CD8-positive, alpha-beta T cell (primary cell): ENCODE measurements at regions of chrX and their contacts with region 1.

Region 1: GRCh38 chrX:102863735-102864134 is 73.3 kb upstream of the RAB40AL start:
- DNase-seq: peak; percentile 68 to 86 (median 79)
- ATAC-seq: peak; percentile 100
- H3K4me3 ChIP-seq: no peak overlapping the region
- H3K4me3 Mint-ChIP-seq: no peak overlapping the region
- H3K27ac ChIP-seq: no peak overlapping the region
- H3K27ac Mint-ChIP-seq: no peak overlapping the region
- H3K4me1 ChIP-seq: no peaks in the 10 kb centered on the region
- H3K4me1 Mint-ChIP-seq: no peaks in the 10 kb centered on the region
- H3K27me3 ChIP-seq: no peaks in the 10 kb centered on the region
- H3K27me3 Mint-ChIP-seq: no peaks in the 10 kb centered on the region
- CTCF ChIP-seq: peak; percentile 73

Region 2: GRCh38 chrX:101595739-101596419 is 1267.9 kb before region 1 on chrX:
- CTCF ChIA-PET with region 1: no interaction called
- POLR2A ChIA-PET with region 1: no interaction called
- intact Hi-C with region 1: loop called in 1 of 2 experiments (anchors 10 kb)
- DNase-seq: peak in 5 of 9 experiments; percentile 13 to 76 (median 42)
- ATAC-seq: peak; percentile 72
- H3K4me3 ChIP-seq: no peak overlapping the region
- H3K4me3 Mint-ChIP-seq: no peak overlapping the region
- H3K27ac ChIP-seq: no peak overlapping the region
- H3K27ac Mint-ChIP-seq: no peak overlapping the region
- H3K4me1 ChIP-seq: no peaks in the 10 kb centered on the region
- H3K4me1 Mint-ChIP-seq: no peaks in the 10 kb centered on the region
- H3K27me3 ChIP-seq: no peaks in the 10 kb centered on the region
- H3K27me3 Mint-ChIP-seq: peaks cover 14% of the 10 kb centered on the region
- CTCF ChIP-seq: peak; percentile 65

Region 3: GRCh38 chrX:102067966-102068708 is 795.6 kb before region 1 on chrX:
- CTCF ChIA-PET with region 1: no interaction called
- POLR2A ChIA-PET with region 1: no interaction called
- intact Hi-C with region 1: loop called (anchors 1 to 5 kb)
- DNase-seq: peak in 5 of 9 experiments; percentile 1 to 32 (median 20)
- ATAC-seq: no peak
- H3K4me3 ChIP-seq: no peak overlapping the region
- H3K4me3 Mint-ChIP-seq: no peak overlapping the region
- H3K27ac ChIP-seq: no peak overlapping the region
- H3K27ac Mint-ChIP-seq: no peak overlapping the region
- H3K4me1 ChIP-seq: no peaks in the 10 kb centered on the region
- H3K4me1 Mint-ChIP-seq: no peaks in the 10 kb centered on the region
- H3K27me3 ChIP-seq: no peaks in the 10 kb centered on the region
- H3K27me3 Mint-ChIP-seq: peaks cover 8% of the 10 kb centered on the region
- CTCF ChIP-seq: peak; percentile 32

Region 4: DNA sequence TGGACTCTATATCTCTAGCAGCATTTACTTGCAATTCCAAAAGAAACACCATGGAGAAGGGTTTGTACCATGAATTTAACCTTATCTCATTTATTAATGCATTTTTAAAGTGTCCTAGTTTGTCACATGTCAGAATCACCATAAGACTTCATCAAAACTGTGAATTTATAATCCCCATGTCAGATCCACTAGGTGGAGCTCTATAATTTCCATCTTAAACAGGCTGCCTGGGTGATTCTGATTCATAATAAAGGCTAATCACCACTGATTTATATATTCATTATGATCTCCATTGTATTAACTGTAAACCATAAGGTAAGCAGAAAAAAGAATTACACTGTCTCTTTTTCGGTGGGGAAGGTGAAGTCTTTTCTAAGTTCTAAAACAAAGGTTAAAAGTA is 734.3 kb before region 1 on chrX:
- CTCF ChIA-PET with region 1: no interaction called
- POLR2A ChIA-PET with region 1: no interaction called
- intact Hi-C with region 1: loop called (anchors 5 to 10 kb)
- DNase-seq: peak in 2 of 9 experiments; percentile 3 to 10
- ATAC-seq: no peak
- H3K4me3 ChIP-seq: no peak overlapping the region
- H3K4me3 Mint-ChIP-seq: no peak overlapping the region
- H3K27ac ChIP-seq: no peak overlapping the region
- H3K27ac Mint-ChIP-seq: no peak overlapping the region
- H3K4me1 ChIP-seq: no peaks in the 10 kb centered on the region
- H3K4me1 Mint-ChIP-seq: peaks cover 8% of the 10 kb centered on the region
- H3K27me3 ChIP-seq: no peaks in the 10 kb centered on the region
- H3K27me3 Mint-ChIP-seq: peaks cover 28% of the 10 kb centered on the region
- CTCF ChIP-seq: peak; percentile 36

Region 5: DNA sequence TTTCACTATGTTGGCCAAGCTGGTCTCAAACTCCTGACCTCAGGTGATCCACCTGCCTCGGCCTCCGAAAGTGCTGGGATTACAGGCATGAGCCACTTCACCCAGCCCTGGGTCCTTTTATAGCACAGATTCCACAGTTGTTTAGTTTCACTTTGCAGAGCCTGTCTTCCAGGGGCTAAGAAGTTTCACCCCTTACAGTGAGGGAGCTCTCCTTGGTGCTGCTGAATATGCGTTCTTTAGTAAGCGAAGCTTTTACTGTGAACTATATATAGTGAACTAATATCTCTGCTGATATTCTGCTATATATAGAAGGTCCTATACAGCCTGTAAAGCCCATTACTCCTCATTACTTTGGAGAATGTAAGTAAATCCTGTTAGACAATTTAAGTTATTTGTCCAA is 725.7 kb before region 1 on chrX:
- CTCF ChIA-PET with region 1: no interaction called
- POLR2A ChIA-PET with region 1: no interaction called
- intact Hi-C with region 1: loop called in 1 of 2 experiments (anchors 10 kb)
- DNase-seq: no peak
- ATAC-seq: no peak
- H3K4me3 ChIP-seq: no peak overlapping the region
- H3K4me3 Mint-ChIP-seq: no peak overlapping the region
- H3K27ac ChIP-seq: no peak overlapping the region
- H3K27ac Mint-ChIP-seq: no peak overlapping the region
- H3K4me1 ChIP-seq: no peaks in the 10 kb centered on the region
- H3K4me1 Mint-ChIP-seq: no peaks in the 10 kb centered on the region
- H3K27me3 ChIP-seq: no peaks in the 10 kb centered on the region
- H3K27me3 Mint-ChIP-seq: peaks cover 11% of the 10 kb centered on the region
- CTCF ChIP-seq: no peak

Region 6: DNA sequence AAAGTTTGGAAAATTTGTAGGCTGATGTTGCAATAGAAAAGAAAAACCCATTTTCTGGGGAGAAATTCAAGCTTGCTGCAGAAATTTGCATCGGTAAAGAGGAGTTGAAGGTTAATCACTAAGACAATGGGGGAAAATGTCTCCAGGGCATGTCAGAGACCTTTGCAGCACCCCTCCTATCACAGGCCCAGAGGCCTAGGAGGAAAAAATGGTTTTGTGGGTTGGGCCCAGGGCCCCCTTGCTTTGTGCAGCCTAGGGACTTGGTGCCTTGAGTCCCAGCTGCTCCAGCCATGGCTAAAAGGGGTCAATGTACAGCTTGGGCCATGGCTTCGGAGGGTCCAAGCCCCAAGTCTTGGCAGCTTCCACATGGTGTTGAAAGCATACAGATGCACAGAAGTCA is 365.0 kb before region 1 on chrX:
- CTCF ChIA-PET with region 1: no interaction called
- POLR2A ChIA-PET with region 1: no interaction called
- intact Hi-C with region 1: loop called in 1 of 2 experiments (anchors 10 kb)
- DNase-seq: no peak
- ATAC-seq: no peak
- H3K4me3 ChIP-seq: no peak overlapping the region
- H3K4me3 Mint-ChIP-seq: no peak overlapping the region
- H3K27ac ChIP-seq: no peak overlapping the region
- H3K27ac Mint-ChIP-seq: no peak overlapping the region
- H3K4me1 ChIP-seq: no peaks in the 10 kb centered on the region
- H3K4me1 Mint-ChIP-seq: no peaks in the 10 kb centered on the region
- H3K27me3 ChIP-seq: peaks cover 0 to 3% of the 10 kb centered on the region in 2 experiments
- H3K27me3 Mint-ChIP-seq: no peaks in the 10 kb centered on the region
- CTCF ChIP-seq: no peak

Region 7: GRCh38 chrX:102643275-102643674 is 220.5 kb before region 1 on chrX:
- CTCF ChIA-PET with region 1: interaction called, 5 read pairs
- POLR2A ChIA-PET with region 1: no interaction called
- intact Hi-C with region 1: loop called (anchors 5 to 10 kb)
- DNase-seq: no peak
- ATAC-seq: no peak
- H3K4me3 ChIP-seq: no peak overlapping the region
- H3K4me3 Mint-ChIP-seq: no peak overlapping the region
- H3K27ac ChIP-seq: no peak overlapping the region
- H3K27ac Mint-ChIP-seq: no peak overlapping the region
- H3K4me1 ChIP-seq: no peaks in the 10 kb centered on the region
- H3K4me1 Mint-ChIP-seq: peaks cover 2% of the 10 kb centered on the region
- H3K27me3 ChIP-seq: no peaks in the 10 kb centered on the region
- H3K27me3 Mint-ChIP-seq: no peaks in the 10 kb centered on the region
- CTCF ChIP-seq: no peak

Region 8: GRCh38 chrX:103393487-103393886 is 529.8 kb after region 1 on chrX:
- CTCF ChIA-PET with region 1: no interaction called
- POLR2A ChIA-PET with region 1: no interaction called
- intact Hi-C with region 1: no loop called
- DNase-seq: no peak
- ATAC-seq: no peak
- H3K4me3 ChIP-seq: no peak overlapping the region
- H3K4me3 Mint-ChIP-seq: no peak overlapping the region
- H3K27ac ChIP-seq: no peak overlapping the region
- H3K27ac Mint-ChIP-seq: no peak overlapping the region
- H3K4me1 ChIP-seq: no peaks in the 10 kb centered on the region
- H3K4me1 Mint-ChIP-seq: no peaks in the 10 kb centered on the region
- H3K27me3 ChIP-seq: no peaks in the 10 kb centered on the region
- H3K27me3 Mint-ChIP-seq: peaks cover 16% of the 10 kb centered on the region
- CTCF ChIP-seq: no peak